Caco-2 (cell line): ENCODE measurements at regions of chr11 and their contacts with region 1.

Region 1: GRCh38 chr11:113314389-113315301 is at the start of gene TTC12:
- DNase-seq: peak; percentile 97 to 99
- H3K4me3 ChIP-seq: peak within 1 kb of the TSS; percentile 72
- H3K4me3 Mint-ChIP-seq: peak within 1 kb of the TSS; percentile 70
- H3K27ac Mint-ChIP-seq: peak within 1 kb of the TSS; percentile 35
- H3K4me1 ChIP-seq: peaks cover 10% of the 10 kb centered on the region
- H3K4me1 Mint-ChIP-seq: peaks cover 6% of the 10 kb centered on the region
- H3K27me3 ChIP-seq: no peaks in the 10 kb centered on the region
- H3K27me3 Mint-ChIP-seq: no peaks in the 10 kb centered on the region
- CTCF ChIP-seq: no peak
- total RNA-seq, gene TTC12: 19.4 and 20.8 TPM in 2 replicates

Region 2: GRCh38 chr11:112470355-112470754 is 844.3 kb before region 1 on chr11:
- CTCF ChIA-PET with region 1: no interaction called
- POLR2A ChIA-PET with region 1: interaction called, 11 read pairs
- intact Hi-C with region 1: no loop called
- DNase-seq: no peak
- H3K4me3 ChIP-seq: no peak overlapping the region
- H3K4me3 Mint-ChIP-seq: no peak overlapping the region
- H3K27ac Mint-ChIP-seq: no peak overlapping the region
- H3K4me1 ChIP-seq: peaks cover 12% of the 10 kb centered on the region
- H3K4me1 Mint-ChIP-seq: peaks cover 4% of the 10 kb centered on the region
- H3K27me3 ChIP-seq: no peaks in the 10 kb centered on the region
- H3K27me3 Mint-ChIP-seq: peaks cover 14% of the 10 kb centered on the region
- CTCF ChIP-seq: no peak

Region 3: GRCh38 chr11:113204280-113204679 is 110.4 kb before region 1 on chr11:
- CTCF ChIA-PET with region 1: no interaction called
- POLR2A ChIA-PET with region 1: no interaction called
- intact Hi-C with region 1: no loop called
- DNase-seq: no peak
- H3K4me3 ChIP-seq: no peak overlapping the region
- H3K4me3 Mint-ChIP-seq: no peak overlapping the region
- H3K27ac Mint-ChIP-seq: no peak overlapping the region
- H3K4me1 ChIP-seq: peaks cover 13% of the 10 kb centered on the region
- H3K4me1 Mint-ChIP-seq: peaks cover 12% of the 10 kb centered on the region
- H3K27me3 ChIP-seq: no peaks in the 10 kb centered on the region; the same call in none of the 2 replicates
- H3K27me3 Mint-ChIP-seq: peaks cover 19% of the 10 kb centered on the region
- CTCF ChIP-seq: no peak

Region 4: GRCh38 chr11:113384551-113384950 is 69.9 kb after region 1 on chr11:
- CTCF ChIA-PET with region 1: no interaction called
- POLR2A ChIA-PET with region 1: no interaction called
- intact Hi-C with region 1: loop called (anchors 1 kb)
- DNase-seq: peak; percentile 86 to 90
- H3K4me3 ChIP-seq: no peak overlapping the region
- H3K4me3 Mint-ChIP-seq: no peak overlapping the region
- H3K27ac Mint-ChIP-seq: no peak overlapping the region
- H3K4me1 ChIP-seq: peaks cover 15% of the 10 kb centered on the region
- H3K4me1 Mint-ChIP-seq: no peaks in the 10 kb centered on the region
- H3K27me3 ChIP-seq: no peaks in the 10 kb centered on the region
- H3K27me3 Mint-ChIP-seq: no peaks in the 10 kb centered on the region
- CTCF ChIP-seq: no peak